ENCODE measurements at regions of chr18 and their contacts with region 1.

Region 1: DNA sequence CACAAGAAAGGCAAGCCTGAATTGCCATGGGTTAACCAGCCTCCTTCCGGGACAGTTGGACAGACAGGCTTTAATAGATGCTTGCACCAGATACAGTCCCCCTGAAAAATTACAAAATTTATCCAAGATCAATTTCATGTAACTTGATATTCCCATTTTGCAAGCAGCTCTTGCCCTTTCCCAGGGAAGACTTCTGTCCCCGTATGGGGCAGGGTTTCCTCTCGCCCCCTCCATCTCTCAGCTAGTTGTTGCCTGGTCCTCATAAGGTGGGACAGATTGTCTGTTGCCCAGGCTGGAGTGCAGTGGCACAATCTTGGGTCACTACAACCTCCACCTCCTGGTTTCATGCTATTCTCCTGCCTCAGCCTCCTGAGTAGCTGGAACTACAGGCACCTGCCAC is 61.2 kb downstream of the TTC39C start:
- DNase-seq: no peak
- H3K4me3 Mint-ChIP-seq: no peak overlapping the region
- H3K27ac Mint-ChIP-seq: peak overlapping the region; percentile 58
- H3K4me1 Mint-ChIP-seq: peaks cover 41% of the 10 kb centered on the region
- H3K27me3 Mint-ChIP-seq: no peaks in the 10 kb centered on the region

Region 2: DNA sequence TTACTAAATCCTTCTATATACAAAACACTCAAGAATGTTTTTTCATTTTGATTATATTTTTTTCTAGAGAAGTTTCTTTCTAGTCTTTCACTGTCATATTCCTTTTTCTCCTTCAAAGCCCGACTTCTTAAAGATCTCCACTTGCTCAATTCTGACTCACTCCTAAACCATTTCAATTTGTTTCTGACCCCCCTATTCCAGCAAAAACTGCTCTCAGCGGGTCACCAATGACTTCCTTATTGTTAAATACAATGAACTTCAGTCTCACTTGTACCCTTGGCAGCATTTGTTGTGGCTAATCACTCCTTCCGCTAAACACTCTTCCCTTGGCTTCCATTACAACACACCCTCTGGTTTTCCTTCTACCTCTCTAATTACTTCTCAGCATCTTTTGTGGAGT is 1253.7 kb before region 1 on chr18:
- intact Hi-C with region 1: no loop called
- DNase-seq: no peak
- H3K4me3 Mint-ChIP-seq: no peak overlapping the region
- H3K27ac Mint-ChIP-seq: no peak overlapping the region
- H3K4me1 Mint-ChIP-seq: no peaks in the 10 kb centered on the region
- H3K27me3 Mint-ChIP-seq: peaks cover 6% of the 10 kb centered on the region

Region 3: GRCh38 chr18:23828426-23828825 is 247.3 kb before region 1 on chr18:
- intact Hi-C with region 1: loop called (anchors 5 kb)
- DNase-seq: peak; percentile 49
- H3K4me3 Mint-ChIP-seq: no peak overlapping the region
- H3K27ac Mint-ChIP-seq: peak overlapping the region; percentile 89
- H3K4me1 Mint-ChIP-seq: peaks cover 52% of the 10 kb centered on the region
- H3K27me3 Mint-ChIP-seq: peaks cover 4% of the 10 kb centered on the region

Region 4: DNA sequence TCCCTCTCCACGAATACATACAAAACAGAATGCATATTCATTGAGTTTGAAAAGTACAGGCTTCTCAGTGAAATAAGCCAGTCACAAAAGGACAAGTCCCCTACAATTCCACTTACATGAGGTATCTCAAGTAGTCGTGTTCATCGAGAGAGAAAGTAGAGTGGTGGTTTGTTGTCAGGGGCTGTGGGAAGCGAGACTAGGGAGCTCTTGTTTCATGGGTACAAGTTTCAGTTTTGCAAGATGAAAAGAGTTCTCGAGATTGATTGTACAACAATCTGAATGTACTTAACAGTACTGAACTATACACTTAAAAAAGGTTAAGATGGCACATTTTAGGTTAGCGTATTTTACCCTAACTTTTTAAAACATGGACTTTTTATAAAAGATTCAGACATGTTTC is 132.6 kb before region 1 on chr18:
- intact Hi-C with region 1: loop called (anchors 5 kb)
- DNase-seq: no peak
- H3K4me3 Mint-ChIP-seq: peak overlapping the region; percentile 3
- H3K27ac Mint-ChIP-seq: no peak overlapping the region
- H3K4me1 Mint-ChIP-seq: peaks cover 26% of the 10 kb centered on the region
- H3K27me3 Mint-ChIP-seq: peaks cover 33% of the 10 kb centered on the region

Region 5: DNA sequence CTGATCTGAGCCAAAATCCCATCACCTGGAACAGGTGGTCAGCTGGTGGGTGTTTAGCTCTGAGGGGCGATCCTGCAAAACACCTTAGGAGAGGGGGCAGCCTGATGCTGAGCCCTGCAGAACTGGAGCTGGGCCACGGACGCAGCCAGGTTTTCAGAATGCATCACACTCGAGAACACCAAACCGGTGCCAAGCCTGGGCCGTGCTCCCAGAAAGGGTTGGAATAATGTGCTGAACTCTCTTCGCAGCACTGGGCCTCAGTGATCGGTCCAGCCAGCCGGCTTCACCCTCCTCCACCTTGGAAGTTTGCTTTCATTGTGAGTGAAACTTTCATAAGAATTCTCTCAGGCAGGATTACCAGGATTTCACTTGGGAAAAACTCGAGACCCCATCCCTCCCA is 117.7 kb before region 1 on chr18:
- intact Hi-C with region 1: no loop called
- DNase-seq: no peak
- H3K4me3 Mint-ChIP-seq: no peak overlapping the region
- H3K27ac Mint-ChIP-seq: no peak overlapping the region
- H3K4me1 Mint-ChIP-seq: no peaks in the 10 kb centered on the region
- H3K27me3 Mint-ChIP-seq: peaks cover 11% of the 10 kb centered on the region

Region 6: DNA sequence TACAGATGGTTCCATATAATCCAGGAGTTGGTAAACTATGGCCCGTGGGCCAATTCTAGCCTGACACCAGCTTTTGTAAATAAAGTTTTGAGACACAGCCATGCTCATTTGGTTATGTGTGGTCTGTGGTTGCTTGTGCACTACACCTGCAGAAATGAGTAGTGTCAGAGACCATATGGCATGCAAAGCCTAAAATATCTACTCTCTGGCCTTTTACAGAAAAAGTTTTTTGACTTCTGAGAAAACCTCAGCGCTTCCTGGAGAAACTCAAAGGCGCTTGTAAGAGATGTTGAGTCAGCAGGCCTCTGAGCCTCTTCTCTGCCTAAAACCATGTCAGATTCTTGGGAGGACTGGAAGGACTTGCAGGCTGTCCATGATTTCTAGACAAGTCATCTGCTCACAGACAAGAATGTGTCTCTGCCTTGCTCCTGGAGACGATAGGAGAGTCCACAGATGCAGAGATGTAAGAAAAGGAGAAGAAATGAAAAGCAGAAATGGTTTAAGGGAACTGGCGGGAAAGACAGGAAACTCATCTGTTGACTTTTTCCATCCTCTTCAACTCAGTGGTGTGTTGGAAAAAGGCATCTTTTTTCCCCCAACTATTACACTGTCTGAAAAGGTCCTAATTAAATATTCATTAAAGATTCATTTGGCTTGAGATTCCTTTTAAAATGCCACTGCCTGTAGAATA is 55.9 kb before region 1 on chr18:
- intact Hi-C with region 1: loop called (anchors 1 kb)
- DNase-seq: peak; percentile 71
- H3K4me3 Mint-ChIP-seq: peak overlapping the region; percentile 80
- H3K27ac Mint-ChIP-seq: peak overlapping the region; percentile 92
- H3K4me1 Mint-ChIP-seq: peaks cover 90% of the 10 kb centered on the region
- H3K27me3 Mint-ChIP-seq: no peaks in the 10 kb centered on the region

Region 7: DNA sequence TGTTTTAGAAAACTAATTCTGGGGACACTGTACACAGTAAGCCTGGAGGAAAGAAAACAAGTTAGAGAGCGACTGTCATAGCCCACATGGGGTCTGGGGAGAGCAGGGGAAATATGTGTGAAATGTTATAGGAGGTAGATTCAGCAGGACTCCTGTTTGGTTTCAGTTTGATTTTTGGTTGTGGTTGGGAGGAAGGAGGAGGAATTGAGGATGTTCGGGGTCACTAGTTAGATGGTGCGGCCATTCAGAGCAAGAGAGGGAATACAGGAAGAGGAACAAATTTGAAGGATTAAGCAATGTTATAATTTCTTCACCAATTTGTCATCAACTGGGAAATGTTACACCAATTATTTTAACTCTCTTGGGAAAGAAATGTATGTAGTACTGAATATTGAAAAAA is 36.1 kb before region 1 on chr18:
- intact Hi-C with region 1: no loop called
- DNase-seq: no peak
- H3K4me3 Mint-ChIP-seq: no peak overlapping the region
- H3K27ac Mint-ChIP-seq: no peak overlapping the region
- H3K4me1 Mint-ChIP-seq: peaks cover 51% of the 10 kb centered on the region
- H3K27me3 Mint-ChIP-seq: no peaks in the 10 kb centered on the region

Region 8: DNA sequence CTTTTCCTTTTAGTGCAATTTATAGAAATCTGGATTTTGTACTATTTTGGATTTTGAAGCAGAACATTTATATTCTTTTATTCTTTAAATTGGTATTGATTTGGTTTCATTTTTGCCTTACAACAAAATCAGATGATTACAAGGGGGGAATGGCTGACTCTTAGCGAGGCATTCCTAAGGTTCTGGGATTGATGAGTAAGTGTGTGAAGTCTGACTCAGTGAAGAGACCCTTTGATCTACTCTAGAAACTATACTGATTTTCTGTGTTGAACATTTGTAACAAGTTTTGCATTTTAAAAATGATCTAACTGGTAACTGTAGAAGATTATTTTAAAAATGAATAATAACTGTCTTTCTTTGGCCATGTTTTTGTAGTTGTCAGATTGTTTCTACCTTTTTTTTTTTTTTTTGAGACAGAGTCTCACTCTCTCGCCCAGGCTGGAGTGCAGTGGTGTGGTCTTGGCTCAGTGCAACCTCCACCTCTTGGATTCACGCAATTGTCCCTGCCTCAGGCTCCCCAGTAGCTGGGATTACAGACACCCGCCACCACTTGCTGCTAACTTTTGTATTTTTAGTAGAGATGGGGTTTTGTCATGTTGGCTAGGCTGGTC is 12.5 kb before region 1 on chr18:
- intact Hi-C with region 1: loop called (anchors 2 kb)
- DNase-seq: no peak
- H3K4me3 Mint-ChIP-seq: no peak overlapping the region
- H3K27ac Mint-ChIP-seq: no peak overlapping the region
- H3K4me1 Mint-ChIP-seq: peaks cover 31% of the 10 kb centered on the region
- H3K27me3 Mint-ChIP-seq: no peaks in the 10 kb centered on the region

Region 9: DNA sequence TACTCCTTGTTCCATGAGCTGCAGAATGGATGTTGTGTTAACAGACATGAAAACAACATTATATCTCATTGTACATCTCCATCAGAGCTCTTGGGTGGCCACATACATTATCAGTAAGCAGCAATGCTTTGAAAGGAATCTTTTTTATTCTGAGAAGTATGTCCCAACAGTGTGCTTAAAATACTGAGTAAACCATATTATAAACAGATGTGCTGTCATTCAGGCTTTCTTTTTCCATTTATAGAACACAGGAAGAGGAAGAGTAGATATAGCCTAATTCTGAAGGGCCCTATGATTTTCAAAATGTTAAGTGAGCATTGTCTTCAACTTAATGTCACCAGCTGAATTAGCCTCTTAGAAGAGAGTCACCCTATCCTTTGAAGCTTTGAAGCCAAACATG is 18.8 kb after region 1 on chr18:
- intact Hi-C with region 1: no loop called
- DNase-seq: no peak
- H3K4me3 Mint-ChIP-seq: no peak overlapping the region
- H3K27ac Mint-ChIP-seq: no peak overlapping the region
- H3K4me1 Mint-ChIP-seq: peaks cover 14% of the 10 kb centered on the region
- H3K27me3 Mint-ChIP-seq: no peaks in the 10 kb centered on the region

Measured in activated T-helper 1 cell treated with anti-CD3 and anti-CD28 coated beads, Interleukin-12 subunit alpha, Interleukin-12 subunit beta, Interleukin-2, Interleukin-4 antibody, amounts not matched to agents 30 ng/mL and 10 ng/mL and 1 ng/mL, durations not matched to agents 14 hours and 24 hours and 36 hours (primary cell).